ENCODE measurements at regions of chr15 and their contacts with region 1.

Region 1: GRCh38 chr15:23497710-23498111 is 50.7 kb upstream of the GOLGA6L2 start:
- DNase-seq: peak in 1 of 2 experiments; percentile 22
- H3K4me3 ChIP-seq: no peak overlapping the region
- H3K4me3 Mint-ChIP-seq: no peak overlapping the region
- H3K27ac Mint-ChIP-seq: no peak overlapping the region
- H3K4me1 ChIP-seq: no peaks in the 10 kb centered on the region
- H3K4me1 Mint-ChIP-seq: no peaks in the 10 kb centered on the region
- H3K27me3 ChIP-seq: no peaks in the 10 kb centered on the region
- H3K27me3 Mint-ChIP-seq: peaks cover 1% of the 10 kb centered on the region
- CTCF ChIP-seq: peak; percentile 41 to 42

Region 2: DNA sequence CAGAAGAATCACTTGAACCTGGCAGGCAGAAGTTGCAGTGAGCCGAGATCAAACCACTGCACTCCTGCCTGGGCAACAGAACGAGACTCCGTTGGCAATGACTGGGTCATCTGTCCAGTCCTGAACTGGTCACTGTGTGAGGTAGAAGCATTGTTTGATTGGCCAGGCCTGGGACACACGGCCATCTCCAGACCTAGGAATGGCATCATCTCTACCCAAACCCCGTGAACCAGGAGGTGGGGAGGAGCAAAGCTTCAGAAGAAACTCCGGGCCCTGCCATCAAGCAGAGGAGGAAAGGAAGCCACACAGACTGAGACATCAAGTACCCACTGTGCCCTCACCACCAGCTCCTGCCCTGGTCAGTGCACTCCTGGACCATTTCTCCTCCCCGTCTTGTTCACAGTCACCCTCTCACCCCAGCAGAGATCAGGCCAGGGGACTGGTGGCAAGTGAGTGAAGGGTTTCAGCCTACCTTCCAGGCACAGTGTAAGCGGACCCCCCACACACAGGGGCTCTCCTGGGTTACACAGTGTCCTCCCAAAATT is 82.3 kb before region 1 on chr15:
- CTCF ChIA-PET with region 1: no interaction called
- POLR2A ChIA-PET with region 1: no interaction called
- intact Hi-C with region 1: loop called (anchors 1 kb)
- DNase-seq: peak in 1 of 2 experiments; percentile 18
- H3K4me3 ChIP-seq: no peak overlapping the region
- H3K4me3 Mint-ChIP-seq: no peak overlapping the region
- H3K27ac Mint-ChIP-seq: no peak overlapping the region
- H3K4me1 ChIP-seq: no peaks in the 10 kb centered on the region
- H3K4me1 Mint-ChIP-seq: no peaks in the 10 kb centered on the region
- H3K27me3 ChIP-seq: no peaks in the 10 kb centered on the region
- H3K27me3 Mint-ChIP-seq: no peaks in the 10 kb centered on the region
- CTCF ChIP-seq: no peak

Region 3: GRCh38 chr15:23565395-23566070 is 67.8 kb after region 1 on chr15 and contains the start of gene MKRN3:
- CTCF ChIA-PET with region 1: interaction called, 6 read pairs
- POLR2A ChIA-PET with region 1: no interaction called
- intact Hi-C with region 1: loop called (anchors 1 kb)
- DNase-seq: peak; percentile 88 to 91
- H3K4me3 ChIP-seq: peak within 1 kb of the TSS; percentile 95
- H3K4me3 Mint-ChIP-seq: peak within 1 kb of the TSS; percentile 88
- H3K27ac Mint-ChIP-seq: peak within 1 kb of the TSS; percentile 99
- H3K4me1 ChIP-seq: peaks cover 31% of the 10 kb centered on the region
- H3K4me1 Mint-ChIP-seq: peaks cover 8% of the 10 kb centered on the region
- H3K27me3 ChIP-seq: no peaks in the 10 kb centered on the region
- H3K27me3 Mint-ChIP-seq: no peaks in the 10 kb centered on the region
- CTCF ChIP-seq: no peak
- total RNA-seq, gene MKRN3: 15.2 and 17.3 TPM in 2 replicates

Region 4: DNA sequence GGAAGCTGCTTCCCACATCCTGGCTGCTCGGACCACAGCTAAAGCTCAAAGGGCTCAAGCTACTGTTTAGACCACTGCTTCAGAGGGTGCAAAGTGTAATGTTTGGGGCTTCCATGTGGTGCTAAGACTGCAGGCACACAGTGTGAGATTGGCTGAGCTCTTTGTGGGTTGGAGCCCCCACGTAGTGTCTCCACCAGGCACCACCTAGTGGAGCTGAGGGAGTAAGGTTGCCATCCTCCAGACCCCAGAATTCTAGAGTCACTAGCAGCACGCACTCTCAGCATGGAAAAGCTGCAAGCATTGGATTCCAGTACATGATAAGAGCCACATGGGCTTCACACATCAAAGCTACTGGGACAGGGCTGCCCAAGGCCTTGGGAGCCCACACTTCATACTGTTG is 77.0 kb after region 1 on chr15:
- CTCF ChIA-PET with region 1: interaction called, 13 read pairs
- POLR2A ChIA-PET with region 1: no interaction called
- intact Hi-C with region 1: no loop called
- DNase-seq: no peak
- H3K4me3 ChIP-seq: no peak overlapping the region
- H3K4me3 Mint-ChIP-seq: no peak overlapping the region
- H3K27ac Mint-ChIP-seq: no peak overlapping the region
- H3K4me1 ChIP-seq: peaks cover 13% of the 10 kb centered on the region
- H3K4me1 Mint-ChIP-seq: peaks cover 7% of the 10 kb centered on the region
- H3K27me3 ChIP-seq: no peaks in the 10 kb centered on the region
- H3K27me3 Mint-ChIP-seq: no peaks in the 10 kb centered on the region
- CTCF ChIP-seq: peak in 1 of 2 experiments; percentile 28

Region 5: DNA sequence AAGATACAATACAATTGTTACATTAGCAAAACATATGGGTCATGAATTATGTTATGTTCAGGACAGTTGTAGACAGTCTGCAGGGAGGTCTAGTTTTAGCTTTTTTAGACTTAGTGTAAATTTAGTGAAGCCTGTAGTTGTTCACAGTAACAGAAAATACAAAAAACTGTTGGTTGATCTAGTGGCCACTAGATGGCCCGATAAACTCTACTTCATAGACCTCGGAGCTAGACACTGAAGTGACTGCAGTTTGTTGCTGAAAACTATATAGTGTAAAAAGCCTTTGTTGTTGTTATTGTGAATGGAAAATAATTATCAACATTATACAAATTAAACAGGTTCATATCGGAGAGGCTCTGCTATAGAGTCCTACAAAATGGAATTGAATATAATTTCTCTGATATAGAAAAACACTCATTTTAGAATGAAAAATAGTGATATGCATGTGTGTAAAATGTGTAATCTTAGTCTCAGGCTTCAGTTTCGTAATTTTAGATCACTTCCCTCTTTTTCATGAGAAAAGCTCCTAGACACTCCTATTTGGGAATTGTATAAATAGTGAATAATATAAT is 131.6 kb after region 1 on chr15:
- CTCF ChIA-PET with region 1: interaction called, 4 read pairs
- POLR2A ChIA-PET with region 1: no interaction called
- intact Hi-C with region 1: loop called (anchors 5 kb)
- DNase-seq: no peak
- H3K4me3 ChIP-seq: peak overlapping the region; percentile 14
- H3K4me3 Mint-ChIP-seq: peak overlapping the region; percentile 59
- H3K27ac Mint-ChIP-seq: no peak overlapping the region
- H3K4me1 ChIP-seq: peaks cover 6% of the 10 kb centered on the region; the same call in 1 of the 2 replicates
- H3K4me1 Mint-ChIP-seq: peaks cover 7% of the 10 kb centered on the region
- H3K27me3 ChIP-seq: no peaks in the 10 kb centered on the region
- H3K27me3 Mint-ChIP-seq: peaks cover 4% of the 10 kb centered on the region
- CTCF ChIP-seq: peak; percentile 24 to 55

Region 6: GRCh38 chr15:23797747-23798446 is 300.2 kb after region 1 on chr15:
- CTCF ChIA-PET with region 1: no interaction called
- POLR2A ChIA-PET with region 1: no interaction called
- intact Hi-C with region 1: no loop called
- DNase-seq: no peak
- H3K4me3 ChIP-seq: no peak overlapping the region
- H3K4me3 Mint-ChIP-seq: no peak overlapping the region
- H3K27ac Mint-ChIP-seq: no peak overlapping the region
- H3K4me1 ChIP-seq: no peaks in the 10 kb centered on the region
- H3K4me1 Mint-ChIP-seq: no peaks in the 10 kb centered on the region
- H3K27me3 ChIP-seq: no peaks in the 10 kb centered on the region
- H3K27me3 Mint-ChIP-seq: no peaks in the 10 kb centered on the region
- CTCF ChIP-seq: no peak

Region 7: GRCh38 chr15:23877502-23878412 is 380.0 kb after region 1 on chr15:
- CTCF ChIA-PET with region 1: interaction called, 4 read pairs
- POLR2A ChIA-PET with region 1: no interaction called
- intact Hi-C with region 1: loop called (anchors 5 kb)
- DNase-seq: peak; percentile 60 to 74
- H3K4me3 ChIP-seq: no peak overlapping the region
- H3K4me3 Mint-ChIP-seq: no peak overlapping the region
- H3K27ac Mint-ChIP-seq: no peak overlapping the region
- H3K4me1 ChIP-seq: no peaks in the 10 kb centered on the region
- H3K4me1 Mint-ChIP-seq: peaks cover 7% of the 10 kb centered on the region
- H3K27me3 ChIP-seq: no peaks in the 10 kb centered on the region
- H3K27me3 Mint-ChIP-seq: peaks cover 4% of the 10 kb centered on the region
- CTCF ChIP-seq: peak; percentile 59 to 73

Measured in Caco-2 (cell line).